ENCODE measurements at regions of chr3 and their contacts with region 1.

Region 1: DNA sequence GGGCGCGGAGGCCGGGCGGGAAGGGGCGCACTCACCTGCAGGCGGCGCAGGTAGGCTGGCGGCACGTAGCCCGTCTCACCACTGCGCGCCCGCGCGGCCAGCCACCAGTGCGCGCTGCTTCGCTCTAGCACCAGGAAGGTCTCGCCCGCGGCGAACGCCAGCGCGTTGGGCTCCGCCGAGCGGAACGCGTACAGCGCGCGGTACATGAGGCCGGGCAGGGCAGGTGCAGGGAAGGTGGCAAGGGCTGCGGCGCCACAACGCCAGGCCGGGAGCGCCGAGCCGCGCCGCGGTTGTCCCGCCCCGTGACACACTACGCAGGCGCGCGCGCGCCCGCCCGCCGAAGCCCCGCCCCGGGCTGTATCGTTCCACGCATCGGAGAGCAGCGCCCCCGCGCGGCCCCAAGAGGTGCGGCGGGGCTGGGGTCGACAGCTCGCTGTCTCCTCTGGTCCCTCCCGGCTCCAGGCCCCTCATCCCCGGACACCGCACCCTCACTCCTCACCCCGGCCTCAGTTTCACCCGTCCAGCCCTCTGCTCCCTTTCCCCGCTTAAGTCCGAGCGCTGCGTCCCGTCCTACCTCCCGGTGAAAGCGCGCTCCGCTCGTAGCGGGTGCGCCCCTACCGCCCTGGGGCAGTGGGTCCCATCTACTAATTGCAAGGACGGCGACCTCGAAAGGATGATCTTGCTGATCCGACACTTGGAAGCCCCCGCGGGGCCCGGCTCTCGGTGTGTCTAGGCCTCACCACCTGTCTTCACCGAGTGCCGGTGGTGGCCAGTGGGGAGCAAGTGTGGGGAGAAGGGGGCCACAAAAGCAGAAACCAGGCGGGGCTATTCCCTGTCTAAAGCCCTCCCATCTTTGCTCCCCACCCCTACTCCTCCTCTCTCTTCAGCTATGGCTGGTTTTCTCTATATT is at the start of gene NCKIPSD:
- DNase-seq: peak; percentile 85
- H3K4me3 Mint-ChIP-seq: peak within 1 kb of the TSS; percentile 97
- H3K27ac Mint-ChIP-seq: peak within 1 kb of the TSS; percentile 95
- H3K4me1 Mint-ChIP-seq: peaks cover 38% of the 10 kb centered on the region
- H3K27me3 Mint-ChIP-seq: no peaks in the 10 kb centered on the region
- total RNA-seq, gene NCKIPSD: 40.8 and 45.5 TPM in 2 replicates

Region 2: DNA sequence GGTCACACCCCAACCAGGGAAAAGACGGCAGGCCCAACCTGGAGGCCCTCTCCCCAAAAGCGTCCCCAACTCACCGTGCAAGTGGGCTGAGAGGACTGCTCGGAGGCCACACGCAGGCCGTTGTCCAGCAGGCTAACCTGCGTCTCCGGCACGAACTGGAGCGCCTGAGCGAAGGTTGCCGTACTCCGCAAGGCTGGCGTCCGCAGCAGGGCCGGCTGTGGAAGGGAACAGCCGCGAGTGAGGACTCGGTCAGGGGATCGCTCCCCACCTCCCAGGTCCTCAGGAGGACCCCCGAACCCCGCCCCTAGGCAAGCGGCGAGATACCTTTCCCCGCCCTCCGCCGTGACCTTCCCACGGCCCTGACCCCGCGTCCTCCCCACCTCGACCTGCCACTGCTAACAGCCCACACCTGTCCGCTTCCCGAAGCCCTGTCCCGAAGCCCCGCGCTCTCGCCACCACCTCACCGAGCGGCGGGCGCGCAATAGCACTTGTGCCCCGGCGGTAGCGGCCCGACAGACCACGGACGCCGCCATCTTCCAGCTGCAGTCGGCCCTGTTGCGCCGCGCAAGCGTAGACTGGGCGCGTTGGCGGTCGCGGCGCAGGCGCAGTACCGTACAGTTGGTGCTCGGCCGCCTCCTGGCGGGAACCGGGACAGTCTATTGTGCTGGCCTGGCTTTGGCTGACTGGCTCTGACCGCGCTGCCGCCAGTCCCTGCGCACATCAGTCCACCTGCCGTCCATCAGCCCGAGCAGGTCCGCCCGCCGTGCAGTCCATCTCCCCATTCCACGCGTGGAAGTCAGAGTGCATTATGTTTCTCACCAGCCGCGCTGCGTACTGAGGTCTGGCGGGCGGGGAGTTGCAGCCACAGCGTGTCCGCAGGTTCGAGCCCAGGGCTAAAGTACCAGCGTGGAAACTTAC is 76.5 kb before region 1 on chr3 and contains the start of gene UQCRC1:
- intact Hi-C with region 1: loop called (anchors 1 kb)
- DNase-seq: peak; percentile 92
- H3K4me3 Mint-ChIP-seq: peak within 1 kb of the TSS; percentile 100
- H3K27ac Mint-ChIP-seq: peak within 1 kb of the TSS; percentile 97
- H3K4me1 Mint-ChIP-seq: peaks cover 22% of the 10 kb centered on the region
- H3K27me3 Mint-ChIP-seq: peaks cover 2% of the 10 kb centered on the region
- total RNA-seq, gene UQCRC1: 191 and 193 TPM in 2 replicates